GM10248 (cell line): ENCODE measurements at regions of chr4 and their contacts with region 1.

Region 1: GRCh38 chr4:77203380-77204197 is 46.6 kb downstream of the CCNG2 start:
- DNase-seq: peak; percentile 59
- CTCF ChIP-seq: peak; percentile 80

Region 2: DNA sequence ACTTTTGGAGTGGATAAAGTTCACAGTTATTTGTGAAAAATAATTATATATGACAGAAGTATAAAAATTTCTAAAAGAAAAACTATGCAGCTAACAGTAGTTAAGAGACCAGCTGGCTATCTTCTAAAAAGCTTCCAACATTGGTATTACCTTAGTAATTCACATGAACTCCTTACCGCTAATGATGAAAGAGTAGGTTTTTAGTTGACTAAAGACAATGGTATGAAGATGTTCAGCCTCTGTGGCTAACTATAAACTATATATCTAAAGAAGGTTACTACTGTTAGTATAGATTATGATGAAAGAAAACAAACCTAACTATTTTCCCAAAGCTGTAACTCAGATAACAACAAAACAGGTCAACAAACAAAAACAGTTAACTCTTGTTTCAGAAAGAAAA is 138.2 kb before region 1 on chr4:
- CTCF ChIA-PET with region 1: interaction called, 13 read pairs
- POLR2A ChIA-PET with region 1: interaction called, 3 read pairs
- DNase-seq: no peak
- CTCF ChIP-seq: no peak

Region 3: DNA sequence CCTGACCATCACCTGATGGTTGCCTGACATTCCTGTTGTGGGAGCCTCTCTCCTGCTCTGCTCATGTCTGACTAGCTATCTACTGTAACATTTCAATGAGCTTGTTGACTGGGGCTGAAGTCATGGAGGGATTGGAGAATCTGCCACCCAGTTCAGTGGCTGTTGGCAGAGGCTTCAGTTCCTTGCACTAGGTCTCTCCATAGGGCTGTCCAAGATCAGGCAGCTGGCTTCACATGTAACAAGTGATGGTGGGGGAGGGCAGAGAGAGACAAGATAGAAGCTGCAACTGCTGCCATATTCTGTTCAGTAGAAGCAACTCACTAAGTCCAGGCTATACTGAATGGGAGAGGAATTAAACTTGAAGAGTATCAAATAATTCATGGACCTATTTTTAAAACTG is 113.7 kb before region 1 on chr4:
- CTCF ChIA-PET with region 1: interaction called, 275 read pairs
- POLR2A ChIA-PET with region 1: no interaction called
- DNase-seq: no peak
- CTCF ChIP-seq: no peak

Region 4: GRCh38 chr4:77110730-77111129 is 92.9 kb before region 1 on chr4:
- CTCF ChIA-PET with region 1: interaction called, 11 read pairs
- POLR2A ChIA-PET with region 1: no interaction called
- DNase-seq: no peak
- CTCF ChIP-seq: no peak

Region 5: GRCh38 chr4:77163636-77164035 is 40.0 kb before region 1 on chr4:
- CTCF ChIA-PET with region 1: interaction called, 24 read pairs
- POLR2A ChIA-PET with region 1: no interaction called
- DNase-seq: no peak
- CTCF ChIP-seq: no peak

Region 6: GRCh38 chr4:77220828-77221613 is 17.4 kb after region 1 on chr4:
- CTCF ChIA-PET with region 1: interaction called, 32 read pairs
- POLR2A ChIA-PET with region 1: no interaction called
- DNase-seq: no peak
- CTCF ChIP-seq: no peak